ENCODE measurements at regions of chr17 and their contacts with region 1.

Region 1: GRCh38 chr17:68291844-68292695 is 775 bp downstream of the ARSG start:
- DNase-seq: peak; percentile 97
- H3K4me3 Mint-ChIP-seq: peak overlapping the region; percentile 98
- H3K27ac Mint-ChIP-seq: peak overlapping the region; percentile 92
- H3K4me1 Mint-ChIP-seq: peaks cover 55% of the 10 kb centered on the region
- H3K27me3 Mint-ChIP-seq: peaks cover 2% of the 10 kb centered on the region

Region 2: DNA sequence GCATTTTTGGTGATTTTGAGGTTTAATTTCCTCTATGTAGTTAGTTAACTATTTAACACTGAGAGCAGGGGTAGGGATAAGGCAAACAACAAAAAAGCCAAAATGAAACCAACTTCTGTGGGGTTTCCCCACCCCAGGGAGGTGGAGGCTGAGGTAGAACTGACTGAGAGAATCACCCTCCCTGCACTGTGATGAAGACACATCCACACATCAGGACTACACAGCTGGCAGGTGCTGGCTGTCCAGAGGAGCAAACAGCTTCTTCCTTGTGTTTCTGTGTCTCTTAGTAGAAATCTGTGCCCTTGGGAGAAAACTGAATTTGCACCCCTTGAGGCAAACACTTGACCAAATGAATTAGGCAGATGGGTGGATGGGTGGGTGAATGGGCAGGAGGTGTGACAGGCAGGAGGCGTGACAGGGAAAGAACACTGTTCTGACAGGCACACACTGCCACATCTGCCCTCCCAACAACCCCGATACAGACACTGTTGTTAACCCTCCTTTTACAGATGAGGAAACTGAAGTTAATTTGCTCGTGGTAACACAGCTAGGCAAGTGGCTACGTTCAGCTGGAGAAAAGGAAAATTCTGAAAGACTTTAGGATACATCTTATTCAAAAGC is 107.1 kb before region 1 on chr17:
- intact Hi-C with region 1: no loop called
- DNase-seq: peak; percentile 92
- H3K4me3 Mint-ChIP-seq: peak overlapping the region; percentile 73
- H3K27ac Mint-ChIP-seq: peak overlapping the region; percentile 65
- H3K4me1 Mint-ChIP-seq: peaks cover 41% of the 10 kb centered on the region
- H3K27me3 Mint-ChIP-seq: peaks cover 3% of the 10 kb centered on the region

Region 3: GRCh38 chr17:68238164-68238872 is 53.8 kb before region 1 on chr17:
- intact Hi-C with region 1: loop called (anchors 2 kb)
- DNase-seq: peak; percentile 85
- H3K4me3 Mint-ChIP-seq: peak overlapping the region; percentile 82
- H3K27ac Mint-ChIP-seq: peak overlapping the region; percentile 98
- H3K4me1 Mint-ChIP-seq: peaks cover 52% of the 10 kb centered on the region
- H3K27me3 Mint-ChIP-seq: no peaks in the 10 kb centered on the region

Region 4: DNA sequence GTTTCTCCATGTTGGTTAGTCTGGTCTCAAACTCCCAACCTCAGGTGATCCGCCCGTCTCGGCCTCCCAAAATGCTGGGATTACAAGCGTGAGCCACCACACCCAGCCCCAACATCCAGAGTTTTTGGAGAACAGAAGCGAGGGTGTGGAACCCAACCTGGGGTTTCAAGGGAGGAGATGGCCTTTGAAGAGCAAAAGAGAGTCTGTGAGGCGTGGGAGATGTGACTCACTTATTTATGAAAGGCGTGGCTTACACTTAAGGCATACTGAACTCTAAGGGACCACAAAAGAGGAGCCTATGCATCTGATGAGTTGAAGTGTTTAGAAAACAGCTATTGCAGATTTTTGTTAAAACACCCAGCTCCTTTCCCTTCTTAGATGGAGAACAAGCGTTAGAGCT is 18.1 kb after region 1 on chr17:
- intact Hi-C with region 1: loop called (anchors 2 kb)
- DNase-seq: peak; percentile 81
- H3K4me3 Mint-ChIP-seq: peak overlapping the region; percentile 40
- H3K27ac Mint-ChIP-seq: no peak overlapping the region
- H3K4me1 Mint-ChIP-seq: peaks cover 40% of the 10 kb centered on the region
- H3K27me3 Mint-ChIP-seq: peaks cover 1% of the 10 kb centered on the region

Region 5: DNA sequence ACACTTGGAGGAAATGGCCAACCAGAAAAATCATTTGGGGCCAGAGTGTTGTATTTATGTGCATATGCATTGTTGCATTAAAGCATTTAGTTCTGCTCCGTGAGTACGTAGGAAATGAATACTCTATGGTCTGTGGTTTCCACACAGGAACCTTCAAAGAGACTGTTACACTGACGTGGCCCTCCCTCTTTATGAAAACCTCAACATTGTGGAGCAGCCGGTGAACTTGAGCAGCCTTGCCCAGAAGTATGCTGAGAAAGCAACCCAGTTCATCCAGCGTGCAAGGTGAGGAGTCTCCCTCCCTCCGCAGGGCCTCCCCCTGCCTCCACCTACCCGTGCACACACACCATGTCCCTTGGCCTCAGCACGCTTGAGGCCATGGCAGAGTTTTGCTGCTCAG is 64.5 kb after region 1 on chr17:
- intact Hi-C with region 1: loop called (anchors 1 kb)
- DNase-seq: peak; percentile 93
- H3K4me3 Mint-ChIP-seq: peak overlapping the region; percentile 59
- H3K27ac Mint-ChIP-seq: peak overlapping the region; percentile 77
- H3K4me1 Mint-ChIP-seq: peaks cover 56% of the 10 kb centered on the region
- H3K27me3 Mint-ChIP-seq: no peaks in the 10 kb centered on the region

Region 6: DNA sequence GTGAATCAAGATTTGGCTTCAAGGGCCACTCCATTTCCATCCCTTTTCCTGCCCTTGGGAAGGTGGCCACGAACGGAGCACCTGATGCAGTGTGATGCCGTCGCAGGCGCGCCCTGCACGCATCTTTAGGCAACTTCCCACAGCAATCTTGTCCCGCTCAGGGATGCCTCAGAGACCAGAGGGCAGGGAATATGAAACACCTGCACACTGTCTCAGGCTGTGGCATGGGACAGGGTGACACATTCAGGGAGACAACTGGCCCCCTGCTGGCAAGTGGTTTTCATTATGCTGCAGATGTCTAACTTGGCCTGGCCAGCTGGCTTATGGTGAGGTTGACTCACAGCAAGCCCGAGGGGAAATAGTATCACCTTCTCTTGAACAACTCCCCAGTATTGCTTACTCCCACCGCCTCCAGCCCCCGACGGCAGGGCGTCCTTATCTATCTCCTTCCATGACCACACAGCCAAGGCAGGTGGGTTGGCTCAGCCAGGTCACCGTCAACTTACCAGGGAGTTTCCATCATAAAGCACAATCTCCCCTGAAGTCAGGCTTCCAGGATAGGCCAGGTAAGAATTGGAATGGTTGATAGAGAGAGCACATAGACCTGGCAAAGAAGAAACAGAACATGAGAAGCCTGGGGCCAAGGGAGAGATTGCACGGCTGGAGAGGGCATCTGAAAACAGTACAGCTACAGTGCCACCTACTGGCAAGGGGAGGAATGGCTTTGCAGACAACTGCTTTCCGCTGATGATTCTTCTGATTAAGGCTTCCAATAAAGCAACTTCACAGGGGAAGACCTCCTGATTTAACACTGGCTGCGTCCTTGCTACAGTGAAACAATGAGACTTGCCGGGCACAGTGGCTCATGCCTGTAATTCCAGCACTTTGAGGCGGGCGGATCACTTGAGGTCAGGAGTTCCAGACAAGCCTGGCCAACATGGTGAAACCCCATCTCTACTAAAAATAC is 144.1 kb after region 1 on chr17:
- intact Hi-C with region 1: loop called (anchors 1 kb)
- DNase-seq: peak; percentile 95
- H3K4me3 Mint-ChIP-seq: peak overlapping the region; percentile 33
- H3K27ac Mint-ChIP-seq: peak overlapping the region; percentile 89
- H3K4me1 Mint-ChIP-seq: peaks cover 53% of the 10 kb centered on the region
- H3K27me3 Mint-ChIP-seq: no peaks in the 10 kb centered on the region

Region 7: GRCh38 chr17:69327060-69327831 is 1035.2 kb after region 1 on chr17 and contains the start of gene ABCA5:
- intact Hi-C with region 1: loop called (anchors 10 kb)
- DNase-seq: peak; percentile 96
- H3K4me3 Mint-ChIP-seq: peak within 1 kb of the TSS; percentile 99
- H3K27ac Mint-ChIP-seq: peak within 1 kb of the TSS; percentile 98
- H3K4me1 Mint-ChIP-seq: peaks cover 29% of the 10 kb centered on the region
- H3K27me3 Mint-ChIP-seq: peaks cover 26% of the 10 kb centered on the region
- total RNA-seq, gene ABCA5: 12.0 and 13.3 TPM in 2 replicates